Calu3 (cell line): ENCODE measurements at regions of chr7 and their contacts with region 1.

Region 1: DNA sequence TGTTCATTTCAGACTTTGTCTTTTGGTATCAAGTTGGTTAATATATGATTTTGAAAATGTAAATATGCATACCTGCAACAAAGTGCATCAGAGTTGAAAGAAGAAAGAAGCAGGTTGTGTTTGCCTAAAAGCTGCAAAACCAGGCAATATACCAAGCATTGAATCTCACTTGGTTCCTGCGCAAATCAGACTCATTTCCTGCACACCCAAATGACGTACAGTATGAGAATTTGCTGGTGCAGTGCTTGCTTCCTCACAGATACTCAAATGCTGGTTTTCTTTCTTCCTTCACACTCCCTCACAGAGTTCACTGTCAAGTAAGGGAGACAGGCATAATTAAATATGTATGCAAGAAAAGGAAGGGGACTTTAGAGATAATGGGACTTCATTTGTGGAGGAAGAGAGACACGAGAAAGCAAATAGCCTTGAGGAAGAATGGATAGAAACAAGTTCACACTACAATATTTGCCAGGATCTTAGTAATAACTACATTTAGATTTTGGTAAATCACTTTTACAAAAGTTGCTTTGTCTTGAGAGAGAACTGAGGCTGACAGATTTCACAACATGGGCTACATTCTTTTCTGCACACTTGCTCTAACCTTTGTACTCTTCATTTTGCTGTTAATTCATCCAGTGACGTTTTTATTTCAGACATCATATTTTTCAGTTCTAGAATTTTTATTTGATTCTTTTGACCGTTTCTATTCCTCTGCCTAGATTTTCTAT is 56.9 kb upstream of the AOAH start:
- DNase-seq: peak; percentile 40
- H3K4me3 Mint-ChIP-seq: peak overlapping the region; percentile 18
- H3K27ac Mint-ChIP-seq: peak overlapping the region; percentile 71
- H3K4me1 Mint-ChIP-seq: peaks cover 45% of the 10 kb centered on the region
- H3K27me3 Mint-ChIP-seq: no peaks in the 10 kb centered on the region
- CTCF ChIP-seq: no peak

Region 2: GRCh38 chr7:36708767-36709166 is 72.4 kb before region 1 on chr7:
- CTCF ChIA-PET with region 1: no interaction called
- intact Hi-C with region 1: loop called (anchors 2 kb)
- DNase-seq: peak; percentile 28
- H3K4me3 Mint-ChIP-seq: peak overlapping the region; percentile 46
- H3K27ac Mint-ChIP-seq: peak overlapping the region; percentile 66
- H3K4me1 Mint-ChIP-seq: peaks cover 46% of the 10 kb centered on the region
- H3K27me3 Mint-ChIP-seq: no peaks in the 10 kb centered on the region
- CTCF ChIP-seq: no peak

Region 3: DNA sequence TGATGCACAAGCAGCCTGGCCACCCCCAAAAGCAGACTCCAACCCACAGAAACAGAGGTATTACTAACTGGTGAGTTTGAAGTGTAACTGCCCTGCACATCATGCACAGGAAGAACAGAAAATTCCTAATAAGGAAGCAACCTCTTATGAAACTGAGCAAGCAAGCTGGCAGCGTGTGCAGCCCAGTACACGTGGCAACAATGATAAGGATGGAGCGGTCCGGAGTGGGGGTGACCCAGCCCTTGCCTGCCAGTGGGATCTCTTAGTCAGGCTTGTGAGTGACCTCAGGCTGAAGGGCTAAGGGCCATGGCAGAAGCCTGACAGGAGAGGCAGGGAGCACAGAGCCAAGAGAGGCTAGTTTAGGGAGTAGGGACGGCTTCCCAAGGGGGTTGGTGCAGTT is 34.8 kb before region 1 on chr7:
- CTCF ChIA-PET with region 1: no interaction called
- intact Hi-C with region 1: loop called (anchors 2 kb)
- DNase-seq: peak; percentile 56
- H3K4me3 Mint-ChIP-seq: no peak overlapping the region
- H3K27ac Mint-ChIP-seq: peak overlapping the region; percentile 71
- H3K4me1 Mint-ChIP-seq: peaks cover 43% of the 10 kb centered on the region
- H3K27me3 Mint-ChIP-seq: no peaks in the 10 kb centered on the region
- CTCF ChIP-seq: no peak

Region 4: DNA sequence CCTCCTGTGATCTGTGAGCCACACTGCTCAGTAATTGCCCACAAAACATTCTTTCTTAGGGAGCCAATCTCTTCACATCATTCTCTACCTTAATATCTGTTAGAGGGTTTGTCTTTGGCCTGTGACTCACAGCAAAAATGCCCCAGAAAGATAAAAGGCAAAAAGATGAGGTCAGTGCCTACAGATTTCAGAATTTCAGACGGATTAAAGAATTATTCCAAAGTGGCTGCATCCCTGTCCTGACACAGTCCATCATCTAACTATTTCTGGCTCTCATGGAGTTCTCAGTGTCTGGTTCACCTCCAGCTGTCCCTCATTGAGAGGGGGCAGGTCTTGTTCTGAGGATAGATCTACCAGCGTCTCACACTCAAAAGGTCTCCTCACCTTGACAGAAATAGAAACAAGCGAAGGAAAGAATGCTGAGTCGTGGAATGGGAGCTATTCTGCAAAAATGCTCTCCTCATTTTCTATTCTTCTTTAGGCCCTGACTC is 81.6 kb after region 1 on chr7:
- CTCF ChIA-PET with region 1: no interaction called
- intact Hi-C with region 1: no loop called
- DNase-seq: no peak
- H3K4me3 Mint-ChIP-seq: no peak overlapping the region
- H3K27ac Mint-ChIP-seq: no peak overlapping the region
- H3K4me1 Mint-ChIP-seq: no peaks in the 10 kb centered on the region
- H3K27me3 Mint-ChIP-seq: peaks cover 32% of the 10 kb centered on the region
- CTCF ChIP-seq: no peak